ENCODE measurements at regions of chr19 and their contacts with region 1.

Region 1: GRCh38 chr19:36054119-36054732 is at the start of gene THAP8:
- DNase-seq: peak; percentile 100
- H3K4me3 Mint-ChIP-seq: peak within 1 kb of the TSS; percentile 94
- H3K27ac Mint-ChIP-seq: peak within 1 kb of the TSS; percentile 98
- H3K4me1 Mint-ChIP-seq: peaks cover 18% of the 10 kb centered on the region
- H3K27me3 Mint-ChIP-seq: no peaks in the 10 kb centered on the region
- total RNA-seq, gene THAP8: 1.1 to 1.2 TPM

Region 2: DNA sequence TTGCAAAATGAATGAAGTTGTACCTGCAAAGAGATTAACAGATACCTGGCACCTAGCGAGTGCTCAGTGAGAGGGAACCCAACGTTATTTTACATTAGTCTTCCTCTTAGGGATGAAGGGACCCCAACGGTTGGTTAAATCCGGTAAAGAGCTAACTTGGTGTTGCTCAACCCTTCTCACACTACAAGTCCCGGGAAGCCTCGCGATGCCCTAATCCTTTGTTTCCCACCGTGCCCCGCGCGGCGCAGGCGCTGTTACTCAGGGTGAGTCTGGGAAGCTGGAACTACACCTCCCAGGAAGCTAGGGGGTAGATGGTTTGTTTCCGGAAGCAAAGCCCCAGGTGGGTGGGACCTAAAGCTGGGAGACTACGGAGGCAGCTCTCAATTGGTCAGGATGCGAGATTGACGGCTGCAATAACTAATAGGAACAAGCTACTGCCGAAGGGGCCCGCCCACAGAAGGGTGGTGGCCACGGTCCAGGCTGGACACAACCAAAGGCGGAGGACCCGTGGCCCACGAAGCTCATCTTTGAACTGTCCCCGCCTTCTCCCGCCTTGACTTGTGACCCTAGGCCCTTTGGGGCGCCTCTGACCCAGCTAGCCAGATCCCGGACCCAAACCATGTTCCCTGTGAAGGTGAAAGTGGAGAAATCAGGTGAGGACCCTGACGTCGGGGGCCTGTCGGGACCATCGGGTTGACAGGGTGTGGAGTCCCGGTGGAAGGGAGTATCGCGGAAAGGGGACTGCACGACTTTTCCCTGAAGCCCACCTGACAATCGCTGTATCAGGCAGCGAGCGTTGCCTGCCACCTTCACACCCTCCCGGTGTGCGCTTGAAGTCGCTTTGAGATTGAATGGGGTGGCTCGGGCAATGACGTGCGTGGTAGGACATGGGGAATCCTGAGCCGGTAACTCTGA is 305.9 kb before region 1 on chr19 and contains the start of gene LIN37:
- CTCF ChIA-PET with region 1: no interaction called
- intact Hi-C with region 1: loop called (anchors 1 kb)
- DNase-seq: peak; percentile 100
- H3K4me3 Mint-ChIP-seq: peak within 1 kb of the TSS; percentile 98
- H3K27ac Mint-ChIP-seq: peak within 1 kb of the TSS; percentile 92
- H3K4me1 Mint-ChIP-seq: peaks cover 44% of the 10 kb centered on the region
- H3K27me3 Mint-ChIP-seq: no peaks in the 10 kb centered on the region
- total RNA-seq, gene LIN37: 5.7 to 9.7 TPM

Region 3: GRCh38 chr19:35775298-35776110 is 278.7 kb before region 1 on chr19 and contains the start of gene ARHGAP33:
- CTCF ChIA-PET with region 1: no interaction called
- intact Hi-C with region 1: loop called (anchors 1 kb)
- DNase-seq: peak; percentile 100
- H3K4me3 Mint-ChIP-seq: peak within 1 kb of the TSS; percentile 78
- H3K27ac Mint-ChIP-seq: no peak within 1 kb of the TSS
- H3K4me1 Mint-ChIP-seq: peaks cover 18% of the 10 kb centered on the region
- H3K27me3 Mint-ChIP-seq: no peaks in the 10 kb centered on the region
- total RNA-seq, gene ARHGAP33: 49.5 to 61.6 TPM

Region 4: DNA sequence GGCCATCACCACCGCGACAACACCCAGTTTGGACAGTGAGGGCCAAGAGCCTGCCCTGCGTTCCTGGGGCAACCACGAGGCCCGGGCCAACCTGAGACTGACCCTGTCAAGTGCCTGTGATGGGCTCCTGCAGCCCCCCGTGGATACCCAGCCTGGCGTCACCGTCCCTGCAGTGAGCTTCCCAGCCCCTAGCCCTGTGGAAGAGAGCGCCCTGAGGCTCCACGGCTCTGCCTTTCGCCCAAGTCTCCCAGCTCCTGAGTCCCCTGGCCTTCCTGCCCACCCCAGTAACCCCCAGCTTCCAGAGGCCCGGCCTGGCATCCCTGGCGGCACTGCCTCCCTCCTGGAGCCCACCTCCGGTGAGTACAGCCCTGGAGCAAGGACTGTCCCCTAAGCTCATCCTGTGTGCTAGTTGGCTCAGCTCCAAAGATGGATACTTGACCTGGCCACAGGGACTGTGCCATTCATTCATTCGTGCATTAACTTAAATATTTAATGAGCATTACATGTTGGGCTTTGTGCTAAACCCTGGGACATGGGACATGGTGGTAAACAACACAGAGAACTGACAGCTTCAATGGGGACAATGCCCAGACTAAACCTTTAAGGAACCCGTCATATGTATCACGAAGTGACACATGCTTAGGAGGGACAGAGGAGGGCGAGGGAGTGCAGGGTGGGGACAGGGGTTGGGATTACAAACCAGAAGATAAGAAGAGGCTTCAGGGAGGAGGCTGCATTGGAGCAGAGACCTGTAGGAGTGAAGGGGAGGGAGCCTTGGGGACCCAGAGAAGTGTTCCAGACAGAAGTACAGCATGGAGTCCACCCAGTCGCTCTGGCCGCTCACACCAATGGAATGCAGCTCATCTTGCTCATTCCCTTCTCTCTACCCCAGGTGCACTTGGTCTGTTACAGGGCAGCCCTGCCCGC is 49.7 kb after region 1 on chr19:
- CTCF ChIA-PET with region 1: no interaction called
- intact Hi-C with region 1: no loop called
- DNase-seq: no peak
- H3K4me3 Mint-ChIP-seq: no peak overlapping the region
- H3K27ac Mint-ChIP-seq: no peak overlapping the region
- H3K4me1 Mint-ChIP-seq: no peaks in the 10 kb centered on the region
- H3K27me3 Mint-ChIP-seq: no peaks in the 10 kb centered on the region

Region 5: DNA sequence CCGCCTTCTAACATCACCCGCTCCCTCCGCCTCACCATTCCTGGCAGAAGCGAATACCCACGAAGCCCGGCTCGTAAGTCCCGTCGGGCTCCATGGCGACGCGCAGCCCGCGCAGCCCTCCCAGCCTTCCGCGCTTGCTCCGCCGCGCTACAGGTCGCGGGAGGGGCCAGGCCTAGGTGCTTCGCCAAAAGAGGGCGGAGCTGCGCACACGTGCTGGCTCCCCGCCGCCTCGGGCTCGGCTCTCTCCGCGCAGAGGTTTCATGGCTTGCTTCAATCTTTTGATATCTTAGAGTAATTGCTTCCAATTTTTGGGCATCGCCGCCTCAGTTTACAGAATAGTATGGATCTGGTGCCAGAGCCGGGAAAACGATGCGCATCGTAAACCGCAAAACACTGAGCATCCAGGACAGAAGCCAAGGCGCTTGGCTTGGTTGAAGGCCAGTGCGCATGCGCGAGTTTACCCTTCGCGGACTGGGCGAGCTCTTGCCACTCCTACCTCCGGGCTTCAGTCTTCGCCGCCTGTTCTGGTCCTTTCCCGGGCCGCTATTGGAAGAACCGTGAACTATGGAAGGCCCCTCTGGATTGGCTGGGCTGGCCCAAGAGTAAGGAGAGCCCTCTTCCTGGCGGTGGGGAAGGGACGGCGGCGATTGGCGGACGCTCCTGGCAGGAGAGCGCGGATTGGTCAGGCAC is 60.7 kb after region 1 on chr19 and contains the start of gene POLR2I:
- CTCF ChIA-PET with region 1: no interaction called
- intact Hi-C with region 1: loop called (anchors 1 kb)
- DNase-seq: peak; percentile 99
- H3K4me3 Mint-ChIP-seq: peak within 1 kb of the TSS; percentile 99
- H3K27ac Mint-ChIP-seq: peak within 1 kb of the TSS; percentile 91
- H3K4me1 Mint-ChIP-seq: peaks cover 31% of the 10 kb centered on the region
- H3K27me3 Mint-ChIP-seq: no peaks in the 10 kb centered on the region
- total RNA-seq, gene POLR2I: 86.8 to 87.4 TPM

Region 6: GRCh38 chr19:36169084-36169760 is 115.0 kb after region 1 on chr19:
- CTCF ChIA-PET with region 1: no interaction called
- intact Hi-C with region 1: loop called (anchors 1 kb)
- DNase-seq: no peak
- H3K4me3 Mint-ChIP-seq: no peak overlapping the region
- H3K27ac Mint-ChIP-seq: no peak overlapping the region
- H3K4me1 Mint-ChIP-seq: peaks cover 4% of the 10 kb centered on the region
- H3K27me3 Mint-ChIP-seq: no peaks in the 10 kb centered on the region